ENCODE measurements at regions of chr18 and their contacts with region 1.

Region 1: DNA sequence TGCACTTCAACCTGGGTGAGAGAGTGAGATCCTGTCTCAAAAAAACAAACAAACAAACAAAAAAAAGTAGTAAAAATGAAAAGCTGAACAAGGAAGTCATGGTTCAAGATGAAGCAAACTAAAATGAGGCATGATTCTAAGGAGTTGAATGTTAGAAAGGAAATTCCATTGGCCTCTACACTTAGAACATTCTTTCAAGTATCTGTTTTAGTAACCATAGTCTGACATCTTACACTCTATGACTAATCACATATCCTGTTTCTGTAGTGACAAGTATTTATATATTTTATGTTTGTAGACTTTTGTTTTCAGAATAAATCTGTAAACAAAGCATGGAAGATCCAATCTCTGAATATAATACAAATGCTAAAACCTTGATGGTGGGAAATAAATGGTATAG is 164.1 kb downstream of the KIAA1328 start:
- DNase-seq: no peak
- H3K4me3 ChIP-seq: no peak overlapping the region
- H3K27ac ChIP-seq: no peak overlapping the region
- H3K4me1 ChIP-seq: no peaks in the 10 kb centered on the region
- H3K27me3 ChIP-seq: no peaks in the 10 kb centered on the region
- CTCF ChIP-seq: no peak

Region 2: DNA sequence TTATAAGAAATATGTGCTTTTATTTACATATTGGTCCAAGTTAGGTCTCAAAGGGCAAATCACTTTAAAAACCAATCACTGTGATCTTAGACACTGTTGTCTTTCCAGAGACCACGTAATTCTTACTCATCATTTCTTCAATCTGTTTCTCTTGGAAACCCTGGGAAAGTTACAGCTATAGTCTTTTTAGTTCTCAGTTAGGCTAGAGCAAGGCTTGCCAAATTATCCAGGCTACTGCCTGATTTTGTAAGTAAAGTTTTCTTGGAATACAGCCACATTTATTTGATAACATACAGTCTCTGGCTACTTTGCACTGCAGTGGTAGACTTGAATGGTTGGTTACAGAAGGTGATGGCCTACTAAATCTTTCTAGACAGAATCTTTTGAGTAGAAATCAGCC is 58.2 kb before region 1 on chr18:
- intact Hi-C with region 1: loop called (anchors 10 kb)
- DNase-seq: peak in 1 of 5 donors; percentile 26
- H3K4me3 ChIP-seq: no peak overlapping the region
- H3K27ac ChIP-seq: no peak overlapping the region
- H3K4me1 ChIP-seq: no peaks in the 10 kb centered on the region
- H3K27me3 ChIP-seq: no peaks in the 10 kb centered on the region
- CTCF ChIP-seq: no peak